ENCODE measurements at regions of chr16 and their contacts with region 1.

Region 1: DNA sequence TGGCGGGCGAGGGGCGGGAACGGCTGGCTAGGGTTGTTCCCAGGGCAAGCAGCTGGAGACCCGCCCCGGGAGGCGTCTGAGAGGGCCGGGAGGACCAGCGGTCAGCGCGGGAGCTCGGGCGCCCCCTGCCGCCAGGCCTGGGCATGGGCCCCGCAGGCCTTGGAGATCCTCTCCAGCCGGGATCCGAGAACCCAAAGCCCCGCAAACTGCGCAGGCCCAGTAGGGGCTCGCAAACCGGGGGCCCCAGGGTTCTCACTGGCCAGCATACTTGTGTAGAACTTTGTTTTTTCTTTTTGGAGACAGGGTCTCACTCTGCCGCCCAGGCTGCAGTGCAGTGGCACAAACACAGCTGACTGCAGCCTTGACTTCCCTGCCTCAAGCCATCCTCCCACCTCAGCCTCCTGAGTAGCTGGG is 20.8 kb upstream of the ZNF423 start:
- DNase-seq: peak in 1 of 2 donors; percentile 47
- ATAC-seq: peak; percentile 58 to 86
- H3K4me3 ChIP-seq: peak overlapping the region; percentile 47 to 55 (median 52)
- H3K27ac ChIP-seq: no peak overlapping the region
- H3K4me1 ChIP-seq: peaks cover 5 to 10% of the 10 kb centered on the region in 2 donors
- H3K27me3 ChIP-seq: peaks cover 0 to 7% (median 0%) of the 10 kb centered on the region in 3 donors
- CTCF ChIP-seq: peak; percentile 69 to 96 (median 85)
- POLR2A ChIP-seq: no peak

Region 2: GRCh38 chr16:49407873-49408550 is 468.7 kb before region 1 on chr16:
- in situ Hi-C with region 1: no loop called
- intact Hi-C with region 1: loop called (anchors 2 kb)
- DNase-seq: peak; percentile 57 to 73
- ATAC-seq: peak; percentile 88 to 92
- H3K4me3 ChIP-seq: no peak overlapping the region
- H3K27ac ChIP-seq: no peak overlapping the region
- H3K4me1 ChIP-seq: peaks cover 0 to 3% of the 10 kb centered on the region in 2 donors
- H3K27me3 ChIP-seq: peaks cover 0 to 5% (median 0%) of the 10 kb centered on the region in 3 donors
- CTCF ChIP-seq: peak; percentile 85 to 95 (median 88)
- POLR2A ChIP-seq: no peak

Region 3: DNA sequence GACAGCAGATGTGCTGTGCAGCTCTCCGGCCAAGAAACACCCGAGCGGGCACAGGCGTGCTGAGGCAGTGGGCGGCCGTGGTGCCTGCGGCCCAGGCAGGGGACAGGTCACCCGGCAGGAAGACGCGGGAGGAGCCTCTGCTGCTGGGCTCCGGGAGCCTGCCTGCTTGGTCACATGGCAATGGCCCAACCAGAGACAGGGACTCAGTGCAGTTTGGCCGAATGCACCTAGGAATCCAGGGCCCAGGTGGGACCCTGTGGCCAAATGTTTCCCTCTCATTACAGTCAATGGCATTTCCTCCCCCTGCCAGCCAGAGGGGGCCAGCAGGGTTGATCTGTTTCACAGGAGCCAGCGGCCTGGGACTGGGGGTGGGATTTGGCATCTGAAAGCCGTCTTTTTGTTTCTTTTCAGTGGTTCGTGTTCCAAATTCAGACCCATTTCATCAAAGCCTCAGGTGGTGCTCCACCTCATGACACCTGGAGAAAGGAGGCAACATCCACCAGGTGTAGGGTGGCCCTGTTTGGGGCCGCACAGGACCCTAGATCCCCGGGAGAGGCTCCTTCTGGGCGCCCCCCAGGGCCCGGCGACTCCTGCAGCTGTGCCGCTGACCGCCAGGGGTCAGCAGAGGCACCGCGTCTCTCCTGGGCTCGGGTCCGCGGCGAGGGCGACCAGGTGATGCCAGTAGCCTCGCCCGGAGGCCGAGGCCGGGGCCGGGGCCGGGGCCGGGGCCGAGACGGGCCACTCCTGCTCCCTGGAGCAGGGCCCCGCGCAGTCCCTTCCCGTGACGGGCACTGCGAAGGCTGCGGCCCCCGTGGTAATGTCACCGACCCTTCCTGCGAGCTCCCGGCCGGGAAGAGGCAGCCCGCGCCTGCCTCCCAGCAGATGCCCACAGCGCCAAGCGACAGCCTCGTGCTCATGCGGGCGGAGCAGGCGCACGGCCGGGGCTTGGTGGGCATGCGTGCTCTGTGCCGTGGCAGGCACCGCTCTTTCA is 384.7 kb before region 1 on chr16:
- in situ Hi-C with region 1: loop called in 1 of 4 experiments (anchors 25 kb)
- intact Hi-C with region 1: loop called (anchors 5 kb)
- DNase-seq: no peak
- ATAC-seq: peak; percentile 68 to 76
- H3K4me3 ChIP-seq: peak overlapping the region; percentile 46 to 63 (median 48)
- H3K27ac ChIP-seq: peak overlapping the region in 3 of 4 donors; percentile 11 to 47 (median 45)
- H3K4me1 ChIP-seq: peaks cover 5 to 8% of the 10 kb centered on the region in 2 donors
- H3K27me3 ChIP-seq: no peaks in the 10 kb centered on the region
- CTCF ChIP-seq: peak; percentile 80 to 98 (median 91)
- POLR2A ChIP-seq: no peak

Region 4: GRCh38 chr16:49608779-49609178 is 267.9 kb before region 1 on chr16:
- in situ Hi-C with region 1: loop called (anchors 25 kb)
- intact Hi-C with region 1: loop called (anchors 2 kb)
- DNase-seq: peak in 1 of 2 donors; percentile 45
- ATAC-seq: peak; percentile 58 to 92
- H3K4me3 ChIP-seq: no peak overlapping the region
- H3K27ac ChIP-seq: no peak overlapping the region
- H3K4me1 ChIP-seq: peaks cover 0 to 6% of the 10 kb centered on the region in 2 donors
- H3K27me3 ChIP-seq: no peaks in the 10 kb centered on the region
- CTCF ChIP-seq: peak in 4 of 5 experiments; percentile 25 to 60 (median 52)
- POLR2A ChIP-seq: no peak

Region 5: DNA sequence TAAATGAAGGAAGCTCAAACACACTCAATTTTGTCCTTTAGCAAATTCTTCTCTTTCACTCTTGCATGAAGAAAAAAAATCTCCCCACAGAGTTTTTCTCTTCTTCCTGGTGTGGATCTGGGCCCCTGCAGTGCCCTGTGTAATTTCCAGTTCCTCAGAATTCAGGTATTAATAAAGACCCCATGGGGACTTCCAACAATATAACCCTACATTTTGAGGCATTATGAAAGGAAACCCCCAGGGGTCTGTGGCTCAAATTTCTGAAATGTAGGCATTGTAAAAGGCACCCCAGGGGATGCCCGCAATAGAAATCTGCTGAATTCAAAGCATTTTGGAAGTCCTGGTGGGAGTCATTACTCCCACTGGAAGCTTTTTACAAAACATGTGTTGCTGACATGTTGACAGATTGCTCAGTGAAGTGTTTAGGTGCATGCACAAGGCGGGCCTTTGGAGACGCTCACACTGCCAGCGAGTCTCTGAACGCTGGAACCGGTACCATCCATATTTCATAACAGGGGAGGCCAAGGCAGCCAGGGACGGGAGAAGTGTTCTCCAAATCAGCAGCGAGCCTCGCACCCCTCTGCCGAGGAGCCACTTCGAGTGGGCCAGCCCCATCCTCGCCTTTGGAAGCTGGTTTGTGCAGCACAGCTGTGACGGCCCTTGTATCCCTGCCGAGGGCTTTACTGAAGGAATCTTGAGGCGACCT is 174.8 kb before region 1 on chr16:
- in situ Hi-C with region 1: no loop called
- intact Hi-C with region 1: loop called (anchors 1 kb)
- DNase-seq: peak; percentile 25 to 62
- ATAC-seq: peak; percentile 56 to 64
- H3K4me3 ChIP-seq: no peak overlapping the region
- H3K27ac ChIP-seq: no peak overlapping the region
- H3K4me1 ChIP-seq: peaks cover 31 to 35% of the 10 kb centered on the region in 2 donors
- H3K27me3 ChIP-seq: no peaks in the 10 kb centered on the region
- CTCF ChIP-seq: no peak
- POLR2A ChIP-seq: no peak

Region 6: GRCh38 chr16:50146479-50147435 is 270.0 kb after region 1 on chr16:
- in situ Hi-C with region 1: no loop called
- intact Hi-C with region 1: no loop called
- DNase-seq: no peak
- ATAC-seq: peak in 1 of 2 donors; percentile 77
- H3K4me3 ChIP-seq: no peak overlapping the region
- H3K27ac ChIP-seq: peak overlapping the region; percentile 25 to 62 (median 42)
- H3K4me1 ChIP-seq: peaks cover 11 to 22% of the 10 kb centered on the region in 2 donors
- H3K27me3 ChIP-seq: no peaks in the 10 kb centered on the region
- CTCF ChIP-seq: no peak
- POLR2A ChIP-seq: no peak

Region 7: GRCh38 chr16:50228364-50228868 is 351.7 kb after region 1 on chr16:
- in situ Hi-C with region 1: no loop called
- intact Hi-C with region 1: no loop called
- DNase-seq: no peak
- ATAC-seq: no peak
- H3K4me3 ChIP-seq: no peak overlapping the region
- H3K27ac ChIP-seq: no peak overlapping the region
- H3K4me1 ChIP-seq: no peaks in the 10 kb centered on the region
- H3K27me3 ChIP-seq: no peaks in the 10 kb centered on the region
- CTCF ChIP-seq: no peak
- POLR2A ChIP-seq: no peak